Activated CD4-positive, alpha-beta memory T cell treated with anti-CD3 and anti-CD28 coated beads for 36 hours (primary cell): ENCODE measurements at regions of chr6 and their contacts with region 1.

Region 1: GRCh38 chr6:42453031-42453653 is 1.4 kb upstream of the TRERF1 start:
- DNase-seq: peak; percentile 86
- H3K4me3 Mint-ChIP-seq: peak overlapping the region; percentile 98
- H3K27ac Mint-ChIP-seq: no peak overlapping the region
- H3K4me1 Mint-ChIP-seq: peaks cover 23% of the 10 kb centered on the region
- H3K27me3 Mint-ChIP-seq: no peaks in the 10 kb centered on the region

Region 2: DNA sequence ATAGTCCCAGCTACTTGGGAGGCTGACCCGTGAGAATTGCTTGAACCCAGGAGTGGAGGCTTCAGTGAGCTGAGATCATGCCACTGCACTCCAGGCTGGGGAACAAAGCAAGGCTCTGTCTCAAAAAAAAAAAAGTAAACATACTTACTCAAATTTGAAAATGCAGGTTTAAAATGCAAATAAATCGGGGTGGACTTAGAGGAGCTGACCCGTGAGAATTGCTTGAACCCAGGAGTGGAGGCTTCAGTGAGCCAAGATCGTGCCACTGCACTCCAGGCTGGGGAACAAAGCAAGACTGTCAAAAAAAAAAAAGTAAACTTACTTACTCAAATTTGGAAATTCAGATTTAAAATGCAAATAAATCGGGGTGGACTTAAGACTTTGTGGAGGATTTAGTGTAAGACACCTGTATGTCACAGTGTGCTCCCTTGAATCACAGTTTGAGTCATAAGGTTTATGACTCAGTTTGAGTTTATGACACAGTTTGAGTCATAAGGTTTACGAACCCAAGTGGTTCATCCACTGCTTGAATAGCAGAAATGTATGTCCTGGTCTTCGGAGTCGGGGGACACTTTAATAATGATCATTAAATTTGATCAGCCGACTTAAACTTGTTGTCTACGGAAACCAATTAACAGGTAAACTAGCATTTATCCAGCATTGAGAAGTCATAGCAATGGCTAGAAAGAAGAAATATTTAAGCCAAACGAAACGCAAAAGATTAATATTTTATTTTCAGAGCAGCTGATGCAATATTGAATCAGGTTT is 228.7 kb before region 1 on chr6:
- CTCF ChIA-PET with region 1: no interaction called
- POLR2A ChIA-PET with region 1: no interaction called
- intact Hi-C with region 1: loop called (anchors 5 kb)
- DNase-seq: peak; percentile 33
- H3K4me3 Mint-ChIP-seq: peak overlapping the region; percentile 54
- H3K27ac Mint-ChIP-seq: peak overlapping the region; percentile 80
- H3K4me1 Mint-ChIP-seq: peaks cover 21% of the 10 kb centered on the region
- H3K27me3 Mint-ChIP-seq: no peaks in the 10 kb centered on the region

Region 3: GRCh38 chr6:42279144-42279781 is 173.9 kb before region 1 on chr6:
- CTCF ChIA-PET with region 1: no interaction called
- POLR2A ChIA-PET with region 1: no interaction called
- intact Hi-C with region 1: no loop called
- DNase-seq: peak; percentile 58
- H3K4me3 Mint-ChIP-seq: no peak overlapping the region
- H3K27ac Mint-ChIP-seq: peak overlapping the region; percentile 23
- H3K4me1 Mint-ChIP-seq: peaks cover 43% of the 10 kb centered on the region
- H3K27me3 Mint-ChIP-seq: no peaks in the 10 kb centered on the region

Region 4: DNA sequence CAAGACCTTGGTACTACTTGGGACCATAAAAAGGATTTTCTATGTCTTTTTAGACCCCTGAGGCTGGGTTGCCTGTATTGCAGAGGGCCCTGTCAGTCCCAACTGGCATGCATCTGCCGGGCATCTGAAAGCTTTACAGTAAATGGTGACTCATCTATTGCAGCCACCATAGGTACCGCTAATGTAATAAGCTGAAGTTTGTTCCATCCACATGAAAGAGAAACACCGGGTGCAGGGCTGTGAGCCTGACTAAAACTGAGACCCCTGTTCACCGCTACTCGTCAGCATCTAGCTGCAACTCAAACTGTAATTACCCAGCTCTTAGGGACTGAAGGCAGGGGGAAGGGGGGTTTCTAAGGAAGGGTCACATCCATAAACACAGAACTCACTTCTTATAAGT is 51.0 kb before region 1 on chr6:
- CTCF ChIA-PET with region 1: interaction called, 4 read pairs
- POLR2A ChIA-PET with region 1: interaction called, 6 read pairs
- intact Hi-C with region 1: loop called (anchors 2 kb)
- DNase-seq: peak; percentile 85
- H3K4me3 Mint-ChIP-seq: no peak overlapping the region
- H3K27ac Mint-ChIP-seq: peak overlapping the region; percentile 76
- H3K4me1 Mint-ChIP-seq: peaks cover 81% of the 10 kb centered on the region
- H3K27me3 Mint-ChIP-seq: no peaks in the 10 kb centered on the region

Region 5: GRCh38 chr6:42440778-42441696 is 12.1 kb before region 1 on chr6:
- CTCF ChIA-PET with region 1: interaction called, 4 read pairs
- POLR2A ChIA-PET with region 1: interaction called, 12 read pairs
- intact Hi-C with region 1: loop called (anchors 1 kb)
- DNase-seq: no peak
- H3K4me3 Mint-ChIP-seq: peak overlapping the region; percentile 60
- H3K27ac Mint-ChIP-seq: peak overlapping the region; percentile 75
- H3K4me1 Mint-ChIP-seq: peaks cover 65% of the 10 kb centered on the region
- H3K27me3 Mint-ChIP-seq: no peaks in the 10 kb centered on the region

Region 6: GRCh38 chr6:42520786-42521607 is 67.9 kb after region 1 on chr6:
- CTCF ChIA-PET with region 1: no interaction called
- POLR2A ChIA-PET with region 1: no interaction called
- intact Hi-C with region 1: loop called (anchors 5 kb)
- DNase-seq: peak; percentile 51
- H3K4me3 Mint-ChIP-seq: no peak overlapping the region
- H3K27ac Mint-ChIP-seq: peak overlapping the region; percentile 82
- H3K4me1 Mint-ChIP-seq: peaks cover 21% of the 10 kb centered on the region
- H3K27me3 Mint-ChIP-seq: peaks cover 1% of the 10 kb centered on the region